ENCODE measurements at regions of chr12 and their contacts with region 1.

Region 1: DNA sequence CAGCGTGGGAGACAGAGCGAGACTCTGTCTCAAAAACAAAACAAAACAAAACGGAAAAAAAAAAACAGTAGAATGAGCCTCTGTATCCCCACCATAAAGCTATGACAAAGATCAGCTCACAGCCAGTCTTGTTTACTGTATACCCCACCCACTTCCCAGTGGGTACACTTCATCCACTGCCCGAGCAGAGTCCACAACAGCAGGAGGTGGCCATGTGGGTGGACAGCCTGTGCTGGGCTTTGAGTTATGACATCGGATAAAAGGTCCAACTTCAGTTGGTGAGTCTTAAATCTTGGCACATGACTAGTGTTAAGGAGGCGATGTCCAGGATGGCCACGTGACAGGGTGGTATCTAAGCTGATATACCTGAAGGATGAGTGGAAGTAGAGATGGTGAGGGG is 34.8 kb upstream of the MAPKAPK5 start:
- DNase-seq: no peak
- H3K4me3 ChIP-seq: no peak overlapping the region
- H3K27ac ChIP-seq: no peak overlapping the region
- H3K4me1 ChIP-seq: no peaks in the 10 kb centered on the region
- H3K27me3 ChIP-seq: no peaks in the 10 kb centered on the region
- CTCF ChIP-seq: no peak
- EP300 ChIP-seq: no peak
- POLR2A ChIP-seq: no peak

Region 2: GRCh38 chr12:111715279-111715678 is 92.0 kb before region 1 on chr12:
- intact Hi-C with region 1: no loop called
- DNase-seq: peak; percentile 44 to 49
- H3K4me3 ChIP-seq: no peak overlapping the region
- H3K27ac ChIP-seq: no peak overlapping the region
- H3K4me1 ChIP-seq: peaks cover 0 to 5% (median 0%) of the 10 kb centered on the region in 4 donors
- H3K27me3 ChIP-seq: no peaks in the 10 kb centered on the region
- CTCF ChIP-seq: no peak
- EP300 ChIP-seq: no peak
- POLR2A ChIP-seq: no peak

Region 3: DNA sequence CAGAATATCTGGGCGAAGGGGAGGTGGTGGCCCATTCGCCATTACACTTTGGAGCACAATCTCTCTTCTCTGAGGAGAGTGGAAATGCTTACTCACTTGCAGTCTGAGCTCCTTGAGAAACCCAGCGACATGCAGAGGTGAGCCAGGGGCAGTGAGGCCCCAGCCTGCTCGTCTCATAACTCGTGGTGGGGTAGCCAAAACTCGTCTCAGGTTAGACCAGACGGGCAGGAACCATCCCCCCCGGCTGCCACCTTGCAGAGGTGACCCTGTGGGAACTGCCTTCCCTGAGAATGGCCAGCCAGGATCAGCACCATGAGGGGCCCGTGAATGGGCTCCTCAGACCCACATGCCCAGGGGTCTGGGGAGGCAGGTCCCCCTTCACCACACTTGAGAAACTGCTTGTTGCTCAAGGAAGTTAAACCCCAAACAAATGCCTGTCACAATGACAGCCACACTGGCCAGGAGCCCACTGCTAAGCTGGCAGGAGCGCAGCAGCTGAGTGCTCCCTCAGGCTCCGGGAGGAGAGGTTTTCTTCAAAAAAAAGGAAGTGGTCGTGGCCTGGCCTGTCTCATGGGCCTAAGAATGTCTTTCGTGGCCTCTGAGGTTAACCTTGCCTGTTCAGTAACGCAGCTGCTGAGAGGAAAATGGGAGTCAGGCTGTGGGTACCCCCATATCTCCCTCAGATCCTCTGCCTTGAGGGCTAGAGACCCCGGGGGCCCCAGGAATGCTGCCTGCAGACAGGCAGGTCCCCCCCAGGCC is 49.7 kb before region 1 on chr12:
- intact Hi-C with region 1: loop called (anchors 5 kb)
- DNase-seq: peak; percentile 41 to 62
- H3K4me3 ChIP-seq: no peak overlapping the region
- H3K27ac ChIP-seq: peak overlapping the region; percentile 20 to 71 (median 56)
- H3K4me1 ChIP-seq: peaks cover 17 to 49% (median 39%) of the 10 kb centered on the region in 4 donors
- H3K27me3 ChIP-seq: no peaks in the 10 kb centered on the region
- CTCF ChIP-seq: no peak
- EP300 ChIP-seq: no peak
- POLR2A ChIP-seq: no peak

Region 4: GRCh38 chr12:111858186-111858585 is 51.0 kb after region 1 on chr12:
- intact Hi-C with region 1: no loop called
- DNase-seq: no peak
- H3K4me3 ChIP-seq: no peak overlapping the region
- H3K27ac ChIP-seq: no peak overlapping the region
- H3K4me1 ChIP-seq: peaks cover 0 to 3% (median 0%) of the 10 kb centered on the region in 4 donors
- H3K27me3 ChIP-seq: no peaks in the 10 kb centered on the region
- CTCF ChIP-seq: no peak
- EP300 ChIP-seq: no peak
- POLR2A ChIP-seq: no peak